ENCODE measurements at regions of chr20 and their contacts with region 1.

Region 1: DNA sequence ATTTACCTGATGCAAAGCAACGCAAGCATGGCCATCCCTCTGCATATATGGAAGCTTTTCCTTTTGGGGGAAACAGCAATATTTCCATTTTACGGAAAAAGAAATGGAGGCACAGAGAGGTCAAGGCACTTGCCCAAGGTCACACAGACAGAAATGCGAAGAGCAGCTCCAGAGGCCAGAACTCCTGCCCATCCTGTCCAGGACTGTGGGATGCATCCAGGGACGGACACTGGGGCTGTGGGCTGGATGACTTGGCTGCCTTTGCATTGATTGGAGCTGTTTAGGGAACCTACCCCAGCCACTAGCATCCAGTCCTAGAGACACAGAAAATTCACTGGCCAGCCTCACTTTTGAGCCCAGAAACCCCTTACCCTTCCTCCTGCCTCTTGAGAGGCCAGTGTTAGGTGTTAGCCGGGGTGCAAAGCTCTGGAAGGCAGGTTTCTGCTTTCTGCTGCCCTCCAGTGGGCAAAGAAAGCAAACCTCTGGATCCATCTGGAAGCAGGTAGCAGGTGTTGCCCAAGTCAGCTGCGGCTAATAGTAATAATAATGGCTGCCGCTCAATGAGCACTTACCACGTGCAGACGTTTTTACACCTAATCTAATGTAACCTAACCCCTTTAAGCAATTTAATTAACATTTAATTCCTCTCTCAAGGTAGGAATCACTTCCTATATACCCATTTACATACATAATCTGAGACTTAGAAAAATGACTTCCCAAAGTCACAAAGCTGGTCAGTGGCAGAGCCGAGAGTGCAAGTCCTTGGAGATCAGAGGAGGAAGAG is 31.7 kb upstream of the CCN5 start:
- DNase-seq: peak; percentile 71
- ATAC-seq: peak; percentile 47
- H3K4me3 ChIP-seq: no peak overlapping the region
- H3K4me3 Mint-ChIP-seq: no peak overlapping the region
- H3K27ac ChIP-seq: no peak overlapping the region
- H3K27ac Mint-ChIP-seq: no peak overlapping the region
- H3K4me1 ChIP-seq: peaks cover 0 to 11% of the 10 kb centered on the region in 2 donors
- H3K4me1 Mint-ChIP-seq: peaks cover 5% of the 10 kb centered on the region
- H3K27me3 ChIP-seq: peaks cover 0 to 3% (median 0%) of the 10 kb centered on the region in 4 experiments
- H3K27me3 Mint-ChIP-seq: peaks cover 10% of the 10 kb centered on the region
- CTCF ChIP-seq: peak; percentile 38

Region 2: GRCh38 chr20:44388466-44389023 is 294.9 kb before region 1 on chr20:
- CTCF ChIA-PET with region 1: interaction called, 5 read pairs
- POLR2A ChIA-PET with region 1: no interaction called
- intact Hi-C with region 1: loop called (anchors 2 kb)
- DNase-seq: peak; percentile 63
- ATAC-seq: peak; percentile 69
- H3K4me3 ChIP-seq: no peak overlapping the region
- H3K4me3 Mint-ChIP-seq: no peak overlapping the region
- H3K27ac ChIP-seq: no peak overlapping the region
- H3K27ac Mint-ChIP-seq: no peak overlapping the region
- H3K4me1 ChIP-seq: peaks cover 3 to 9% of the 10 kb centered on the region in 2 donors
- H3K4me1 Mint-ChIP-seq: peaks cover 5% of the 10 kb centered on the region
- H3K27me3 ChIP-seq: peaks cover 0 to 15% (median 5%) of the 10 kb centered on the region in 4 experiments
- H3K27me3 Mint-ChIP-seq: peaks cover 30% of the 10 kb centered on the region
- CTCF ChIP-seq: peak; percentile 74

Region 3: GRCh38 chr20:44642203-44643153 is 41.0 kb before region 1 on chr20:
- CTCF ChIA-PET with region 1: interaction called, 36 read pairs
- POLR2A ChIA-PET with region 1: no interaction called
- intact Hi-C with region 1: no loop called
- DNase-seq: peak; percentile 59
- ATAC-seq: no peak
- H3K4me3 ChIP-seq: no peak overlapping the region
- H3K4me3 Mint-ChIP-seq: peak overlapping the region; percentile 71
- H3K27ac ChIP-seq: peak overlapping the region; percentile 50 to 74
- H3K27ac Mint-ChIP-seq: peak overlapping the region; percentile 84
- H3K4me1 ChIP-seq: peaks cover 47 to 61% of the 10 kb centered on the region in 2 donors
- H3K4me1 Mint-ChIP-seq: peaks cover 62% of the 10 kb centered on the region
- H3K27me3 ChIP-seq: no peaks in the 10 kb centered on the region
- H3K27me3 Mint-ChIP-seq: no peaks in the 10 kb centered on the region
- CTCF ChIP-seq: no peak

Region 4: GRCh38 chr20:44733341-44734069 is 50.0 kb after region 1 on chr20:
- CTCF ChIA-PET with region 1: interaction called, 29 read pairs
- POLR2A ChIA-PET with region 1: no interaction called
- intact Hi-C with region 1: no loop called
- DNase-seq: peak; percentile 61
- ATAC-seq: peak; percentile 78
- H3K4me3 ChIP-seq: no peak overlapping the region
- H3K4me3 Mint-ChIP-seq: no peak overlapping the region
- H3K27ac ChIP-seq: no peak overlapping the region
- H3K27ac Mint-ChIP-seq: no peak overlapping the region
- H3K4me1 ChIP-seq: no peaks in the 10 kb centered on the region
- H3K4me1 Mint-ChIP-seq: peaks cover 9% of the 10 kb centered on the region
- H3K27me3 ChIP-seq: no peaks in the 10 kb centered on the region
- H3K27me3 Mint-ChIP-seq: no peaks in the 10 kb centered on the region
- CTCF ChIP-seq: peak; percentile 73

Region 5: GRCh38 chr20:44866703-44867335 is 183.4 kb after region 1 on chr20:
- CTCF ChIA-PET with region 1: interaction called, 23 read pairs
- POLR2A ChIA-PET with region 1: no interaction called
- intact Hi-C with region 1: no loop called
- DNase-seq: no peak
- ATAC-seq: no peak
- H3K4me3 ChIP-seq: no peak overlapping the region
- H3K4me3 Mint-ChIP-seq: peak overlapping the region; percentile 76
- H3K27ac ChIP-seq: no peak overlapping the region
- H3K27ac Mint-ChIP-seq: no peak overlapping the region
- H3K4me1 ChIP-seq: peaks cover 0 to 8% of the 10 kb centered on the region in 2 donors
- H3K4me1 Mint-ChIP-seq: peaks cover 6% of the 10 kb centered on the region
- H3K27me3 ChIP-seq: peaks cover 0 to 7% (median 1%) of the 10 kb centered on the region in 4 experiments
- H3K27me3 Mint-ChIP-seq: peaks cover 3% of the 10 kb centered on the region
- CTCF ChIP-seq: no peak

Region 6: GRCh38 chr20:45293041-45294002 is 609.9 kb after region 1 on chr20:
- CTCF ChIA-PET with region 1: interaction called, 11 read pairs
- POLR2A ChIA-PET with region 1: no interaction called
- intact Hi-C with region 1: loop called (anchors 10 kb)
- DNase-seq: peak; percentile 85
- ATAC-seq: peak; percentile 86
- H3K4me3 ChIP-seq: peak overlapping the region in 4 of 5 experiments; percentile 39 to 65 (median 60)
- H3K4me3 Mint-ChIP-seq: peak overlapping the region; percentile 87
- H3K27ac ChIP-seq: no peak overlapping the region
- H3K27ac Mint-ChIP-seq: no peak overlapping the region
- H3K4me1 ChIP-seq: peaks cover 13 to 21% of the 10 kb centered on the region in 2 donors
- H3K4me1 Mint-ChIP-seq: peaks cover 18% of the 10 kb centered on the region
- H3K27me3 ChIP-seq: peaks cover 0 to 42% (median 20%) of the 10 kb centered on the region in 4 experiments
- H3K27me3 Mint-ChIP-seq: peaks cover 41% of the 10 kb centered on the region
- CTCF ChIP-seq: peak; percentile 96

Region 7: DNA sequence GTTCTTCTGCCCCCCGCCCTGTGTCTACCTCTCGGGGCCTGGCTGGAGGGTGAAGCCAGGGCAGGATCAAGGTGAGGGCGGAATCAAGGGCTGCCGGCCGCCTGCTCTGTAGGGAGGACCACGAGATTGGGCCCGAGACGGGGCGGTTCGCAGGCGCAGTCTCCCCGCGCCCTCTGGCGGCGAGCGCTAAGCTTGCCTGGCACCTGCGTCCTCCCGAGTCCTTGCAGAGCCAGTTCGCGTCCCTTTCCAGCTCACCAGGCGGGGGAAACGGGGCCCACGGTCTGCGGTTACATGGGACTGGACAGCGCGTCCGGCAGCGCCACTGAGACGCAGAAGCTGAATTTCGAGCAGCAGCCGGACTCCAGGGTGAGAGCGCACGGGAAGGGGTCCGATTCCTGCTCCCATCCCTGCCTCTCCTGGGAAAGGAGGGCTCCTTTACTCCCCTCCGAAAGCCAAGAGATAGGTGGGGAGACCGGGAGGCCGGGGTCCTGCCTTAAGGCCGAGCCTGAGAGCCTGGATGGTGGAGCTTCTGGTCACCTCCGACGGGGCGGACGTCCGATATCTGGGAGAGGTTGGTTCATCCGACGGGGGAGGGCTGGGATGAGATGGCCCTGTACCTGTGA is 628.2 kb after region 1 on chr20:
- CTCF ChIA-PET with region 1: interaction called, 5 read pairs
- POLR2A ChIA-PET with region 1: no interaction called
- intact Hi-C with region 1: loop called (anchors 1 kb)
- DNase-seq: peak; percentile 77
- ATAC-seq: peak; percentile 64
- H3K4me3 ChIP-seq: no peak overlapping the region
- H3K4me3 Mint-ChIP-seq: no peak overlapping the region
- H3K27ac ChIP-seq: no peak overlapping the region
- H3K27ac Mint-ChIP-seq: no peak overlapping the region
- H3K4me1 ChIP-seq: peaks cover 15 to 16% of the 10 kb centered on the region in 2 donors
- H3K4me1 Mint-ChIP-seq: peaks cover 7% of the 10 kb centered on the region
- H3K27me3 ChIP-seq: peaks cover 0 to 67% (median 18%) of the 10 kb centered on the region in 4 experiments
- H3K27me3 Mint-ChIP-seq: peaks cover 59% of the 10 kb centered on the region
- CTCF ChIP-seq: peak; percentile 82

Measured in B cell (primary cell).